ENCODE measurements at regions of chr15 and their contacts with region 1.

Region 1: DNA sequence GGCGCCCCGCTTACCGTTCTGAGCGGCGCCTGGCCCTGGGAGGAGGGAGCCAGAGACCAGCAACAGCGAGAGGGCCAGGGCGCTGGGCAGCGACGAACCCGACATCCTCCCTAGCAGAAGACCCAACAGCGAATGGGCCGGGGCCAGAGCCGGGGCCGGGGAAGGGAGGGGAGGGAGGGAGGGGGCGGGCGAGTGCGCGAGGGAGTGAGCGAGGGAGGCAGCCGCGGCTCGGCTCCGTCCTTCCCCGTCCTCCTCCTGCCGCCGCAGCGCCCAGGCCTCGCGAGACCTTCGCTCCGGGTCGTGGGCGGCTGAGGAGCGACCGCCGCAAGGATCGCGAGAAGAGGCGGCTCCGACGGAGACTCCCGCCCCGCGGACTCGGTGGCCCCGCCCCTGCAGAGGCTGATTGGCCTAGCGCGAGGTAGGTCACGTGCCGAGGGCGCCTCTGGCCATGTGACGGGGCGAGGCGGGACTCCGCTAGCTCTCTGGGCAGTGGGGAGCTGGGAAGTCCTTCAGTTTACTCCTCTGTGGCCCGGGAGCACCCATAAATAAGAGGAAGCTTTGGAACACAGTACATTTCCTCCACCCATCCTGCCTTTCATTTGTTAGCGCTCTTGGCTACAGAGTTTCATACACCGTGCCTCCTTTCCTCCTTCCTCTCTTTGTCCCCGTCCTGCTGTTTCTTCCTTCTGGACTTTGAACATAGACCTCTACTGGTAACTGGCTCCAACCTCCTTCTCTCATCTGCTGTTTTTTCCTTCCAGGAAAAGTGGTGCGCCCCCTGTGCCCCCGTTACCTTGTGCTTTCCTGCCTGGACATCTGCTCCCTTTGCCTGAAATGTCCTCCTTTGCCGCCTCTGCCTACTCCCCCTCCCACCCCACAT is at the start of gene NPTN:
- DNase-seq: peak; percentile 99
- H3K4me3 Mint-ChIP-seq: peak within 1 kb of the TSS; percentile 89
- H3K27ac Mint-ChIP-seq: peak within 1 kb of the TSS; percentile 74
- H3K4me1 Mint-ChIP-seq: peaks cover 54% of the 10 kb centered on the region
- H3K27me3 Mint-ChIP-seq: peaks cover 10% of the 10 kb centered on the region
- total RNA-seq, gene NPTN: 91.1 and 91.2 TPM in 2 replicates

Region 2: GRCh38 chr15:72783563-72784237 is 849.7 kb before region 1 on chr15 and contains the start of gene ADPGK:
- intact Hi-C with region 1: loop called (anchors 5 kb)
- DNase-seq: peak; percentile 95
- H3K4me3 Mint-ChIP-seq: peak within 1 kb of the TSS; percentile 92
- H3K27ac Mint-ChIP-seq: peak within 1 kb of the TSS; percentile 99
- H3K4me1 Mint-ChIP-seq: peaks cover 68% of the 10 kb centered on the region
- H3K27me3 Mint-ChIP-seq: no peaks in the 10 kb centered on the region
- total RNA-seq, gene ADPGK: 94.0 and 101 TPM in 2 replicates

Region 3: GRCh38 chr15:73305331-73306211 is 327.8 kb before region 1 on chr15:
- intact Hi-C with region 1: loop called (anchors 5 kb)
- DNase-seq: no peak
- H3K4me3 Mint-ChIP-seq: no peak overlapping the region
- H3K27ac Mint-ChIP-seq: no peak overlapping the region
- H3K4me1 Mint-ChIP-seq: peaks cover 14% of the 10 kb centered on the region
- H3K27me3 Mint-ChIP-seq: peaks cover 3% of the 10 kb centered on the region

Region 4: GRCh38 chr15:73584699-73585420 is 48.5 kb before region 1 on chr15:
- intact Hi-C with region 1: loop called (anchors 2 kb)
- DNase-seq: no peak
- H3K4me3 Mint-ChIP-seq: no peak overlapping the region
- H3K27ac Mint-ChIP-seq: peak overlapping the region; percentile 60
- H3K4me1 Mint-ChIP-seq: peaks cover 65% of the 10 kb centered on the region
- H3K27me3 Mint-ChIP-seq: no peaks in the 10 kb centered on the region

Region 5: GRCh38 chr15:73677146-73677607 is 43.8 kb after region 1 on chr15:
- intact Hi-C with region 1: loop called (anchors 1 kb)
- DNase-seq: peak; percentile 31
- H3K4me3 Mint-ChIP-seq: no peak overlapping the region
- H3K27ac Mint-ChIP-seq: no peak overlapping the region
- H3K4me1 Mint-ChIP-seq: peaks cover 33% of the 10 kb centered on the region
- H3K27me3 Mint-ChIP-seq: peaks cover 21% of the 10 kb centered on the region

Region 6: DNA sequence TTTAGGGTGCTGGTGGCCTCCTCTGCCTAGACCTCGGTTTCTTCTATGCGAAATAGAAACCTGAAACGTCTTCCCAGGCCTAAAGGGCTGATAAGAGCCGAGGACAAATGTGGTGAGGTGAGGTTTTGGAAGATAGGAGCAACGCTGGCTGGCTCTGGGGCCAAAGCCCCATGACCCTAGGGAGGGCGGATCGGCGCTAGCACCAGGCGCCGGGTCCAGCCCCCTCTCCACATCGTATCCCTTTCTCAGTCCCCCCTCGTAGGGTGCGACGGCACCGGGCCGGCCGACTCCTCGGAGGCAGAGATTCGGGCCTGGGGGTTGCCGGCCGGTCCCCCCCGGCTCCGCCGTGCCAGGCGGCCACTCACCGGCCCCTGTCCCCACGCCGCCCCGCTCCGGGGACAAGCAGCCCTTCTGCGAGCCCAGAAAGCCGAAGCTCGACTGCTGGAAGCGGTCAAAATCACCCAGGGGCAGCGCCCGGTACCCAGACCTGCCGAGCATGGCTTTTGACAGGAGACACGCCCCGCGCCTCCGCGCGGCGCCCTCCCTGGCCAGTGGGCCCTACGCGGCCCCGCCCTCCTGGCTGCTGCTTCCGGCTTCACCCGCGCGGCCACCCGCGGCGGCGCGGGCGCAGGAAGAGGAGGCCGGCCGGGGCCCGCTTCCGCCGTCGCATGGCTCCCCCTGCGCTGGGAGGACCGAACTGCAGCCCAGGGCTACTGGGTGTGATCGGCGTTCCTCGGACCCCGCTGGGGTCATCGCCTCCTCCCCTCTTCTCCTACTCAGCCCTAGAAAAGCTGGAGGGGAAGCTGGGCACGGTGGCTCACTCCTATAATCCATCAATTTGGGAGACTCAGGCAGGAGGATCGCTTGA is 358.6 kb after region 1 on chr15 and contains the start of gene STOML1:
- intact Hi-C with region 1: loop called (anchors 10 kb)
- DNase-seq: peak; percentile 96
- H3K4me3 Mint-ChIP-seq: peak within 1 kb of the TSS; percentile 89
- H3K27ac Mint-ChIP-seq: peak within 1 kb of the TSS; percentile 85
- H3K4me1 Mint-ChIP-seq: peaks cover 49% of the 10 kb centered on the region
- H3K27me3 Mint-ChIP-seq: no peaks in the 10 kb centered on the region
- total RNA-seq, gene STOML1: 10.6 and 11.6 TPM in 2 replicates

Region 7: DNA sequence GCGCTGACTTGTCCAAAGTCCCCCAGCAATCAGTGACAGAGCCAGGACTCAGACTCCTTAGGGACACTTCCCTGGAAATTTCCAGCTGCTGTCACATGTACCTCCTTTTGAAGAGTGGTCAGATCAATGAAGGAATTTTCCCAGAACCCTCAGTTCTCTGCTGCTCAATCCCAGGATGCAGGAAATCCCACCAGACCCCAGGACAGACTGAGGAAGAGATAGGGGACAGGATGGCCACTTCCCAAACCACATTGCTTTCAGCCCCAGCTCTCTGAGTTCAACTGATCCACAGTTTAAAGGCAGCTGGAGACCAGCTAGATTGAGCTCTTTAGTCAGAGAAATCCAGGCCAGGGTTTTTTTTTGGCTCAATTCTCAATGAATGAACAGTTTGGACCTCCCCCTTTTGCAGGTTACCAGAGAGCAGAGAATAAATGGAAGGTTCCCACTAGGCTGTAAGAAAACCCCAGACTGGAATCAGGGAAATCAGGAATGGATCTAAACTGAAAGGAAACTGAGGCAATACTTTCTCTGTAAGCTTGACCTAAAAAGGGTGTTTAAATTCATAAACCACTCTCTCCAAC is 1090.5 kb after region 1 on chr15:
- intact Hi-C with region 1: no loop called
- DNase-seq: no peak
- H3K4me3 Mint-ChIP-seq: no peak overlapping the region
- H3K27ac Mint-ChIP-seq: no peak overlapping the region
- H3K4me1 Mint-ChIP-seq: peaks cover 17% of the 10 kb centered on the region
- H3K27me3 Mint-ChIP-seq: peaks cover 23% of the 10 kb centered on the region